ENCODE measurements at regions of chr6 and their contacts with region 1.

Region 1: GRCh38 chr6:30914076-30914853 is at the start of gene VARS2:
- DNase-seq: peak; percentile 90 to 98 (median 94)

Region 2: DNA sequence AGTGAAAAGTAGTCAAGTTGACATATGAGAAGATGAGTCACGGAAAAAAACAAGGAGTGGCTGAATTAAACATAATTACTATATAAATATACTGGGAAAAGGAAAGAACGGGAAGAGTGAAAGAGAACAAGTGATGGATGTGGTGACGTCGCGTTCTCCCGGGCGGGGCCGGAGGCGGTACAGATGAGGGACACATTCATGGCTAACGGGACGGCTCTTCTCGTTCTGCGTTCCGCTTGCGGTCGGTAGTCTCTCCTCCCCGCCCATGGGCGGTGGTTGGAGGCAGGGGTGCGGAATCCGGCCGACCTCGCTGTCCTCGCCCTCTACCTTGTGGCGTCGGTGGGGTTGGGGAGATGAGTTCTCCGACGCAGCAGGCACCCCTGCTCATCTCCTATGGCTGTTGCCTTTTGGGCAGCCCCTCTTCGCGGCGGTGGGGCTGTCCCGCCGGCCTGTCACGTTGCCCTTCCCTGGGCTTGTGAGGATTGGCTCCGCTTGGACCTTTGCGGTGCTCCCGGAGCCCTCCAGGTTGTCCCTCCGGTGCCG is 1064.2 kb before region 1 on chr6:
- intact Hi-C with region 1: no loop called
- DNase-seq: no peak

Region 3: GRCh38 chr6:30828027-30828960 is 86.0 kb before region 1 on chr6:
- intact Hi-C with region 1: loop called (anchors 5 kb)
- DNase-seq: peak; percentile 80 to 97 (median 91)

Region 4: DNA sequence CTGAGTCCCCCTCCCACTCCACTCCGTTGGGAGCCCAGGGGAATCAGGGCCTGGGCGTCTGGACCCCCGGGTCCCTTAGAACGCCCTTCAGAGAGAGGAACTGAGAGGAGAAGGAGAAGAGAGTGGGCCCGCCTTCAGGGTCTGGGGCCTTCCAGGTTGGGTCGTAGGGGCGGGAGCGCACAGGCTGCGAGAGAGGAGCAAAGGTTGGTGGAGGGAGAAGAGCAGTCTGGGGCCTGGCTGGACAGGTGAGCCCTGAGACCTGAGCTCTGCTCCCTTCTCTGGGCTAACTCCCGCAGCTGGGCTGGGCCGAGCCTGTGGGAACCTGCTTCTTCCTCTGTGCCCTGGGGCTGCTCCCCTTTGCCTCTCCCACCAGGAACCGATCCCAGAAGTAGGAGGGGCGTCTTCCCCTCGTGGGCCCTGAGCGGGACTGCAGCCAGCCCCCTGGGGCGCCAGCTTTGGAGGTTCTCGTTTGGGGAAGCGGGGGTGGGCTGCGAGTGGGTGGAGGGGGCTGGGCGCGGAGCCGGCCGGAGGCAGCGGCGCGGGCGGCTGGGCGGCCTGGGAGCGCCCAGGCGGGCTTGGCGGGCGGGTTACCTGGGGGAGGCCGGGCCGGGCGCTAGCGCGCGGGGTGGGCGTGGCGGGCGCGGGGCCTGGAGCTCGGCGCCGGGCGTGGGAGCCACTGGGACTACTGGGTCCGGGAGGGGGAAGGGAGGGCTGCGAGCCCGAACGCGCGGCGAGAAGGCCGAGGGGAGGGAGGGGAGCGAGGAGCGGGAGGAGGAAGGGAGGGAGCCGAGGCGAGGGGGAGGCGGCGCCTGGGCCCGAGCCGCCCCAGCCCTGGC is 30.4 kb before region 1 on chr6 and contains the start of gene DDR1:
- intact Hi-C with region 1: loop called (anchors 2 kb)
- DNase-seq: peak; percentile 40 to 96 (median 88)

Region 5: DNA sequence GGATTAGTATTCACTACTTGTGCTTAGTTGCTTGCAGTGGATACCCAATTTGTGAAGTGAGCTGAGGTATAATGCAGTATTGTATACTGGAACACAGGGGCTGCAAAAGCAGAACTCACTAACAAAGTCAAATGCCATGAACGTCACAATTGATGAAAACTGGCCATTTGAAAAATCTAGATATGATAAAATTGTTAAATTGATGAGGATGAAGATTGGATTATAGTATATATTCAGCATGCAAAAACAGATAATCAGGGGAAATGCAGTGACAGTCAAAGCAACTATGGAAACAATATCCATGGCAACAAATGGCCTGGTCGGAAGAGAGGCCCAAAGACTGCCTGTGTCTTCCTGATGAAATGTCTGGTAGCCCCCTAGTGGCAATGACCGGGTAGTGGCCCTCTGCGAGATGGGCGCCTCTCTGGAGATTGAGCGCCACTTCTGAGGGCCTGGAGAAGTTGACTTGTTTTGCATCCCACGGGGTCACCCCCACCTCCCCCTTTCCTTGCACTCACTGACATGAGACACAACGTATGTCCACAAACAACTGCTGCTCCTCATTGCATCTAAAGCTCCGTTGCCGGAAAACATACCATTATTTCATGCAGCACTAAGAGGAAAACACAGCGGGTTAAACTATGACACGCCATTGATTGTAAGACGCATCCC is 154.5 kb after region 1 on chr6:
- intact Hi-C with region 1: loop called (anchors 2 kb)
- DNase-seq: peak; percentile 64 to 96 (median 87)